ENCODE measurements at regions of chr11 and their contacts with region 1.

Region 1: GRCh38 chr11:36478700-36479329 is 31.3 kb downstream of the TRAF6 start:
- DNase-seq: peak in 1 of 4 experiments; percentile 52
- ATAC-seq: peak; percentile 78
- H3K4me3 ChIP-seq: no peak overlapping the region
- H3K27ac ChIP-seq: no peak overlapping the region
- H3K4me1 ChIP-seq: no peaks in the 10 kb centered on the region
- H3K27me3 ChIP-seq: no peaks in the 10 kb centered on the region
- CTCF ChIP-seq: peak; percentile 52 to 76 (median 55)
- EP300 ChIP-seq: no peak
- POLR2A ChIP-seq: no peak
- RAD21 ChIP-seq: peak; percentile 87 to 88

Region 2: DNA sequence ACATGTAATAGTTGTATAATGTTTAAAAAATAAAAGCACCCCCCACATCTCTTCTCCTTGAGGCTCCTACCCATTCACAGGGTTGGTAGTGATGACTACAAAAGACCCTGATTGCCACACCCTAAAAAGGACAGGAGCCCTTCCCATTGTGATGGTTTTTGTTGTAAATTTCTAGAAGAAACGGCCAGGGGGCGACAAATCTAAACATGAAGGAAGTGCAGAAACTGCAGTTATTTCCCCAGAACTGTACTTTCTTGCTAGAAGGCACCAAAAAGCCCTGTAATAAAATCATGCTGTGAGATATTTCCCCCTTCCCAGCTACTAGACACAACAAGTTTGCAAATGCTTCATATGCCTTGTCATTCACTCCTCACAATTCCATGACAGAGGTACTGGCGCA is 171.9 kb before region 1 on chr11:
- CTCF ChIA-PET with region 1: no interaction called
- POLR2A ChIA-PET with region 1: no interaction called
- in situ Hi-C with region 1: loop called (anchors 5 kb)
- intact Hi-C with region 1: loop called (anchors 1 kb)
- DNase-seq: peak in 1 of 4 experiments; percentile 31
- ATAC-seq: 0 out of 3 replicates have a peak, but pooled peaks have one; percentile 31
- H3K4me3 ChIP-seq: no peak overlapping the region
- H3K27ac ChIP-seq: no peak overlapping the region
- H3K4me1 ChIP-seq: no peaks in the 10 kb centered on the region
- H3K27me3 ChIP-seq: no peaks in the 10 kb centered on the region
- CTCF ChIP-seq: peak; percentile 28 to 56 (median 36); a peak in 3 of 6 replicates
- EP300 ChIP-seq: no peak
- POLR2A ChIP-seq: no peak
- RAD21 ChIP-seq: peak; percentile 69

Region 3: GRCh38 chr11:36339888-36340287 is 138.9 kb before region 1 on chr11:
- CTCF ChIA-PET with region 1: no interaction called
- POLR2A ChIA-PET with region 1: no interaction called
- in situ Hi-C with region 1: no loop called
- intact Hi-C with region 1: loop called (anchors 5 kb)
- DNase-seq: no peak
- ATAC-seq: no peak
- H3K4me3 ChIP-seq: no peak overlapping the region
- H3K27ac ChIP-seq: no peak overlapping the region
- H3K4me1 ChIP-seq: no peaks in the 10 kb centered on the region
- H3K27me3 ChIP-seq: peaks cover 9 to 31% of the 10 kb centered on the region in 2 experiments; a peak in 3 of 5 replicates
- CTCF ChIP-seq: no peak
- EP300 ChIP-seq: no peak
- POLR2A ChIP-seq: no peak
- RAD21 ChIP-seq: no peak

Region 4: DNA sequence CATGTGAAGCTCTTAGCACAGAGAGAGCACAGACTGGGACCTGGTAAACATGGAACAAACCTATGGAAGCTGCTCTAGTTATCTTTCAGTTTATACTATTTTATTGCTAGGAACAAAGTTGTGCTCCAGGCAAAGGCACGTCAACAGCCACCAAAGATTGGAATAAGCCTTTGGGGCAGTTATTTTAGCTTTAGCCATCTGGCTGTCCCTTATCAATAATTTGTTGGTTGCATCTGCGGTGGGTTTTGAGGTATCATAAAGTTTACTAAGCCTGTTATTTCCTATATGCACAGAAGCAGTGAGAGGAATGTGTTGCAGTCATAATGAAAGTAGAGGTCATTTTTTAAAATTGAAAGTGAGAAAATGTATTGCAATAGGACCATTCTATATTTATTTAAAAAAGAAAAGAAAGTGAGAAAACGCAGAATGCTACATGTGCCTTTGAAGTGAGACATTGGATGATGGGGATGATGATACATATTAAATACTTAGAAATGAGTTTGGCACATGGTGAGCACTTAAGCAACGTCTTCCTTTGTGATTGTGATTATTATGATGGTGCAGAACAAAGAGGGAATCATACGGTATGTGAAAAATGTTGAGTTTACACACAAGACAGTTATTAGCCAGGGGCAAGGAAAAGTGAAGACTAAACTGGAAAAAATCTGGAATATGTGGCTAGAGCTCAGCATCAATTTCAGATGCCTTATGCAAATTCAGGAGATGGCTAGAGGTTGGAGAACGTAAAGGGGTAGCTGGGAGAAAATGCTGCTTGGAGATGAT is 124.4 kb before region 1 on chr11:
- CTCF ChIA-PET with region 1: no interaction called
- POLR2A ChIA-PET with region 1: no interaction called
- in situ Hi-C with region 1: no loop called
- intact Hi-C with region 1: no loop called
- DNase-seq: no peak
- ATAC-seq: no peak
- H3K4me3 ChIP-seq: no peak overlapping the region
- H3K27ac ChIP-seq: no peak overlapping the region
- H3K4me1 ChIP-seq: no peaks in the 10 kb centered on the region
- H3K27me3 ChIP-seq: peaks cover 2 to 10% of the 10 kb centered on the region in 2 experiments; a peak in 2 of 5 replicates
- CTCF ChIP-seq: no peak
- EP300 ChIP-seq: no peak
- POLR2A ChIP-seq: no peak
- RAD21 ChIP-seq: no peak

Region 5: DNA sequence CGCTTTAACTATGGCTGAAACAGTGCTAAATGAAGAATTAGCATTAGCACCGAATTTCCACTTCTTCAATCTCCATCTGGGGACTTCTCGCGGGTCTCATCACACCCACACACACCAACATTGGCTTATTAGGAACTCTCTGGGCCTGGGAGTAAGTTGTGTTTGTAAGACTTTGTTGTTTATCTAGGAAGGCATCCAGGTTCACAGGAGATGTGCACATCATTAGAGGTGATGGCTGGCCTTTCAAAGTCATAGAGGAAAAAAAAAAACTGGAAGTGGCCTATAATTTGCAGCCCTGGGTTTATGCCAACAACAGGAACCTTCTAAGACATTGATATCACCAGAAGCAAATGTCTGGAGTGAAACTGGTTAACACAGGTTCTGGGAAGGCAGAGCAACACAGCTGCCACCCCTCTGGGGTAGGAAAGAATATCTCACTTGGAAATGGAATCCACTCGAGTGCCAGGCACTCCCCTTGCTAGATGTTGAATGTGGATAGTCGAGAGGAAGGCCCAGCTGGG is 53.2 kb before region 1 on chr11:
- CTCF ChIA-PET with region 1: no interaction called
- POLR2A ChIA-PET with region 1: no interaction called
- in situ Hi-C with region 1: no loop called
- intact Hi-C with region 1: no loop called
- DNase-seq: no peak
- ATAC-seq: no peak
- H3K4me3 ChIP-seq: no peak overlapping the region
- H3K27ac ChIP-seq: no peak overlapping the region
- H3K4me1 ChIP-seq: no peaks in the 10 kb centered on the region; a peak in 1 of 5 replicates
- H3K27me3 ChIP-seq: peaks cover 3 to 20% of the 10 kb centered on the region in 2 experiments; a peak in 2 of 5 replicates
- CTCF ChIP-seq: no peak
- EP300 ChIP-seq: no peak
- POLR2A ChIP-seq: no peak
- RAD21 ChIP-seq: no peak

Region 6: GRCh38 chr11:36928621-36929020 is 449.8 kb after region 1 on chr11:
- CTCF ChIA-PET with region 1: no interaction called
- POLR2A ChIA-PET with region 1: no interaction called
- in situ Hi-C with region 1: no loop called
- intact Hi-C with region 1: no loop called
- DNase-seq: no peak
- ATAC-seq: no peak
- H3K4me3 ChIP-seq: no peak overlapping the region
- H3K27ac ChIP-seq: no peak overlapping the region
- H3K4me1 ChIP-seq: no peaks in the 10 kb centered on the region
- H3K27me3 ChIP-seq: no peaks in the 10 kb centered on the region
- CTCF ChIP-seq: no peak
- EP300 ChIP-seq: no peak
- POLR2A ChIP-seq: no peak
- RAD21 ChIP-seq: no peak

Region 7: DNA sequence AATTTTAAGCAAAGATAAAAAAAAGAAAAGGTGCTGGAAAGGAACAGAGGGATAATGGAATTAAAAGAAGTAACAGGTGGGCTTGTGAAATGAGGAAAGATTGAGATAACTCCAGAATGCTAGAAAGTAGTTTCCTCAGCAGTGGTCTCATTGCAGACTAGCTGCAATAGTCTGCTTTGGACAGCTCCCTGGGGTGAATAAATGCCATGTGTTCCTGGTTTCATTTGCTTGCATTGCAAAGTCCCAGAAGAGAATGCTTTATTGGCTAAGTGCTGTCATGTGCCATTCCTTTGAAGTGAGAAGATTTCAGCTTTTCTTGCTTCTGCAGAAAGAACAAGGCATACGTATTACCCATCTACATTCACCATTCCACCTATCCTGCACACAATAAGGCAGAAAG is 598.1 kb after region 1 on chr11:
- CTCF ChIA-PET with region 1: no interaction called
- POLR2A ChIA-PET with region 1: no interaction called
- in situ Hi-C with region 1: no loop called
- intact Hi-C with region 1: no loop called
- DNase-seq: no peak
- ATAC-seq: no peak
- H3K4me3 ChIP-seq: no peak overlapping the region
- H3K27ac ChIP-seq: no peak overlapping the region
- H3K4me1 ChIP-seq: no peaks in the 10 kb centered on the region
- H3K27me3 ChIP-seq: no peaks in the 10 kb centered on the region
- CTCF ChIP-seq: no peak
- EP300 ChIP-seq: no peak
- POLR2A ChIP-seq: no peak
- RAD21 ChIP-seq: no peak